H1 (cell line): ENCODE measurements at regions of chr11 and their contacts with region 1.

Region 1: DNA sequence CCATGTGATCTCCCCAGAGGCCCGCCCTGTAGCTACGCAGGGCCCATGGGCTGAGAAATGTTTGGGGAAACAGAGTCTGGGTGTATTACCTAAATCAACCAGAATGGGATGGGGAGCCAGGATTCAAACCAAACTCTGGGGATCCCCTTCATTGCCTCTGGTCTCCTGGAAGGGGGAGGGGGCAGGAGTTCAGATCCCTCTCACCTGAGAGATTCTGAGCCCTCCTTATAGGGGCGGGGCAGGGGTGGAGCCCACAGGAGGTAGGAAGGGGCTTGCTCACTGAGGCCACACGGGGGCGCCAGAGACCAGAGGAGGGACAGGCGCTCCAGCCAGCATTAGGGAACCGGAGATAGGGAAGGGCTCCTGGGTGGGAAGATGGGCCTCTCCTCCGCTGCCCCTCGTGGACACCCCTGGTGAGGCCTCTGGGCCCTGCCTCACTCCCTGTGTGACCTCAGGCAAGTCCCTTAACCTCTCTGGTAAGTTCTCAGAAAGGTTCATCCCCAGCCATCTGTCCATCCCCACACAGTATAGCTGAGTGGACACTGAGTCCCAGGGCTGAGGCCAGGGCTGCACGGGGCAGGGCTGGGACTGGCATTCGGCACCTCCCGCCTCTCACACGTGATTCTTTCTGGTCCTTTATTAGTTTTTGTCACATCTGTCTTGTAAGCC is 2.7 kb upstream of the CDC42BPG start:
- DNase-seq: peak; percentile 87 to 98
- H3K4me3 ChIP-seq: no peak overlapping the region
- H3K27ac ChIP-seq: no peak overlapping the region
- H3K4me1 ChIP-seq: peaks cover 0 to 38% (median 21%) of the 10 kb centered on the region in 4 experiments; a peak in 6 of 7 replicates
- H3K27me3 ChIP-seq: no peaks in the 10 kb centered on the region
- CTCF ChIP-seq: peak in 2 of 3 experiments; percentile 91 to 97; a peak in 3 of 4 replicates
- EP300 ChIP-seq: no peak
- POLR2A ChIP-seq: no peak
- RAD21 ChIP-seq: peak; percentile 91 to 97

Region 2: DNA sequence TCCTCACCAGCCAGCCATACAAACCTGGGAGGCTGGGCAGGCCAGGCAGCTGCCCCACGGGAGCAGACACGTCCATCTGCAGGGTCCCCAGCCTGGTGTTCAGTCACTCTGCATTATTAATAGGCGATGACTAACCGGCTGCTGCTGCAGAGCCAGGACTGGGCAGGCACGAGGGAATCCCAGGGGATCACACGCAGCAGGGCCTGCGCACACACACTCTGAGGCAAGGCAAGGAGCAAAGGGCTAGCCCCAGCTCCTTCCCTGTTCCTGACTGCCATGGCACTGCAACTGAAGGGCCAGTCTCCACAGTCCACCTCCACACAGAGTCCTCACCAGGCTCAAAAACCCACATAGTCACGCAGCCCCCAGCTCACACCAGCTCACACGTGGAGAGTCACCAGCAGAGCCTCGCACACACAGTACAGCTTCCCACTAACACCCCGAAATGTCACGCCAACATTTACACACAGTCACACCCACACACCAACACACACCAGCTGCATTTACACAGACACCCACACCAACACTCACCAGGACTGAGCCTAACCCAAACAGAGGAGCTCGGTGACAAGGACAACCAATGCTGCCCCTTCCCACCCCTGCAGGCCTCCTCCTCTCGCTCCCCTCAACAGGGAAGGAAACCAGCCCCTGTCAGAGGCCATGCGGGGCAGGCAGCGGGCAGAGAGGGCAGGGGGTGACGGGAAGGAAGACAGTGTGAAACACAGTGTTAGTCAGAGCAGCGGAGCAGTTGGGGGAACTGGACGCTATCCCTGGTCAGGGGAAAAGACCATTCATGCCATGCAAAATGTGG is 171.5 kb before region 1 on chr11:
- CTCF ChIA-PET with region 1: no interaction called
- POLR2A ChIA-PET with region 1: no interaction called
- DNase-seq: no peak
- H3K4me3 ChIP-seq: no peak overlapping the region
- H3K27ac ChIP-seq: no peak overlapping the region
- H3K4me1 ChIP-seq: no peaks in the 10 kb centered on the region; a peak in 1 of 7 replicates
- H3K27me3 ChIP-seq: peaks cover 0 to 3% (median 0%) of the 10 kb centered on the region in 4 experiments; a peak in 3 of 7 replicates
- CTCF ChIP-seq: no peak
- EP300 ChIP-seq: no peak
- POLR2A ChIP-seq: no peak
- RAD21 ChIP-seq: no peak

Region 3: GRCh38 chr11:64742889-64743590 is 104.1 kb before region 1 on chr11:
- CTCF ChIA-PET with region 1: no interaction called
- POLR2A ChIA-PET with region 1: no interaction called
- DNase-seq: peak in 1 of 2 experiments; percentile 94
- H3K4me3 ChIP-seq: peak overlapping the region; percentile 46 to 67 (median 57)
- H3K27ac ChIP-seq: no peak overlapping the region
- H3K4me1 ChIP-seq: peaks cover 4 to 33% (median 29%) of the 10 kb centered on the region in 4 experiments
- H3K27me3 ChIP-seq: peaks cover 0 to 32% (median 19%) of the 10 kb centered on the region in 4 experiments; a peak in 5 of 7 replicates
- CTCF ChIP-seq: peak in 2 of 3 experiments; percentile 74; a peak in 3 of 4 replicates
- EP300 ChIP-seq: no peak
- POLR2A ChIP-seq: 0 out of 3 replicates have a peak, but pooled peaks of 1 of the 2 experiments have one; percentile 14
- RAD21 ChIP-seq: peak; percentile 56 to 74

Region 4: DNA sequence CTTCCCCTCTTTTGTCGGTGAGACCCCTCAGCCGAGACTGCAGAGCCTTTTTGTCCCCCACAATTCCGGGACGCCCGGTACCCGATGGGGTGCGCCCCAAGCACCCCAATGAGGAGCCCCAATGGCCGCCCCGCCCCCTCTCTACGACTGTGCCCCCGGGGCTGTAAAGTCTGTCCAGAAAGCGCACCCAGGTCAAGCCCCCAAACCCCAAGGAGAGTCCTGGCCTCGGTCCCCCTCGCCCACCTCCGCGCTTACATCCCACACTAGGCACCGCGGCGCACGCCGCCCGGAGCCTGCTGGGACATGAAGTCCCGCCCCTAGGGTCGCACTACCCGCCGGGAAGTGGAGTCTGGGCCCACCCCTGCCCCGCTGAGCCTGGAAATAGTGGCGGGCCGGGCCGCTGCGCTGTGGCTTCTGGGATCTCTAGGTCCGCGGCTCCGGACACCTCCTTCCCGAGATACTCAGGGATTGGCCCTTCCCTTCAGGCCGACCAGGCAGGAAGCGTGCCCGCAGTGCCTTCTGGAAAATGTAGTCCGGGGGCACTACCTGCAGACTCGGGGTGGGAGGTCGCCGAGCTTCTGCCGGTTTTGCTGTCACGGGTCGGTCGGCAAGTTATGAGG is 36.8 kb before region 1 on chr11 and contains the start of gene MEN1:
- CTCF ChIA-PET with region 1: interaction called, 24 read pairs
- POLR2A ChIA-PET with region 1: interaction called, 13 read pairs
- DNase-seq: peak; percentile 85 to 92
- H3K4me3 ChIP-seq: peak within 1 kb of the TSS; percentile 64 to 93 (median 81)
- H3K27ac ChIP-seq: no peak within 1 kb of the TSS; the same call in 1 of the 2 replicates
- H3K4me1 ChIP-seq: peaks cover 0 to 7% (median 2%) of the 10 kb centered on the region in 4 experiments; a peak in 5 of 7 replicates
- H3K27me3 ChIP-seq: no peaks in the 10 kb centered on the region
- CTCF ChIP-seq: no peak
- EP300 ChIP-seq: no peak
- POLR2A ChIP-seq: 0 out of 3 replicates have a peak, but pooled peaks of 1 of the 2 experiments have one; percentile 21
- RAD21 ChIP-seq: no peak
- total RNA-seq, gene MEN1: 56.3 and 56.9 TPM in 2 replicates

Region 5: DNA sequence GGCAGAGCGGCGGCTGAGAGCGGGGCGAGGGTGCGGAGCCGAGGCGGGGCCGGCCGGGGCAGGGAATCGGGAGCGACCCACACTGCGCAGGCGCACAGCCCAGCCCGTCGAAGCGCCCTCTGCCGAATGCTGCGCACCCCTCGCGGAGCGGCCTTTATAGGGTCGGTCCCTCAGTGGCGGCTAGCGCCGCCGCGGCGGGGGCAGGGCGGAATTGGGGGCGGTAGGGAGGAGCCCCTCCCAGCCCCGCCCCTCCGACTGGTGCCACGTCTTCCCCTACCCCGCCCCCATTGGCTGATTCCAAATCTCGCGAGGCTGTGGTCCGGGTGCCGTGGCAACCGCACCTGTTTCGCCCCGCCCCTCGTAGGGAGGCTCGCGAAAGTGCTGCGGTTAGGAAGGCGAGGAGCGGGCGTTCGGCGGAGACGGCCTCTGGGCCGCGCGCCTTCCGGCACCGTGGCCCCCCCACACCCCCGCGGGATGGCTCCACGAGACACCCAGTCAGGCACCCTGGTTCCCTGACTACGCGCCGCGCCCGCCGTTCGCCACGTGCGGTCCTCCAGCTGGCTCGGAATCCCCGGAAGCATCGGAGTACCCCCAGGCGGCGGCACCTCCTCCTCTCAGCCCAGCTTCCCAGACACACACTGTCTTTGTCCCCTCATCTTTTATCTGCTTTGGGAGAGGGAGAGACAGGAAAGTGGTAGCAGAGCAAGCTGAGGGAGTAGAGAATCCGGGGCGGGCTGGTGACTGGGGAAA is 31.5 kb after region 1 on chr11 and contains the start of gene EHD1:
- CTCF ChIA-PET with region 1: interaction called, 1,058 read pairs
- POLR2A ChIA-PET with region 1: interaction called, 408 read pairs
- DNase-seq: peak; percentile 94 to 99
- H3K4me3 ChIP-seq: peak within 1 kb of the TSS; percentile 60 to 97 (median 94)
- H3K27ac ChIP-seq: peak within 1 kb of the TSS; percentile 71
- H3K4me1 ChIP-seq: peaks cover 0 to 22% (median 11%) of the 10 kb centered on the region in 4 experiments; a peak in 6 of 7 replicates
- H3K27me3 ChIP-seq: peaks cover 0 to 6% (median 2%) of the 10 kb centered on the region in 4 experiments; a peak in 3 of 7 replicates
- CTCF ChIP-seq: peak; percentile 66 to 76 (median 71)
- EP300 ChIP-seq: no peak
- POLR2A ChIP-seq: peak in 1 of 2 experiments; percentile 92; a peak in 2 of 3 replicates
- RAD21 ChIP-seq: 0 out of 4 replicates have a peak, but pooled peaks of 1 of the 2 experiments have one; percentile 24
- total RNA-seq, gene EHD1: 36.9 and 42.9 TPM in 2 replicates

Region 6: GRCh38 chr11:64935359-64936081 is 88.4 kb after region 1 on chr11 and contains the start of gene GPHA2:
- CTCF ChIA-PET with region 1: interaction called, 20 read pairs
- POLR2A ChIA-PET with region 1: no interaction called
- DNase-seq: peak; percentile 53 to 61
- H3K4me3 ChIP-seq: peak within 1 kb of the TSS in 2 of 4 experiments; percentile 19 to 38; a peak in 2 of 8 replicates
- H3K27ac ChIP-seq: no peak within 1 kb of the TSS
- H3K4me1 ChIP-seq: peaks cover 1 to 14% (median 7%) of the 10 kb centered on the region in 4 experiments
- H3K27me3 ChIP-seq: no peaks in the 10 kb centered on the region; a peak in 1 of 7 replicates
- CTCF ChIP-seq: peak in 2 of 3 experiments; percentile 1 to 10; a peak in 1 of 4 replicates
- EP300 ChIP-seq: no peak
- POLR2A ChIP-seq: peak in 1 of 2 experiments; percentile 41; a peak in 1 of 3 replicates
- RAD21 ChIP-seq: peak in 1 of 2 experiments; percentile 21; a peak in 2 of 4 replicates
- total RNA-seq, gene GPHA2: 0.97 and 1.5 TPM in 2 replicates

Region 7: DNA sequence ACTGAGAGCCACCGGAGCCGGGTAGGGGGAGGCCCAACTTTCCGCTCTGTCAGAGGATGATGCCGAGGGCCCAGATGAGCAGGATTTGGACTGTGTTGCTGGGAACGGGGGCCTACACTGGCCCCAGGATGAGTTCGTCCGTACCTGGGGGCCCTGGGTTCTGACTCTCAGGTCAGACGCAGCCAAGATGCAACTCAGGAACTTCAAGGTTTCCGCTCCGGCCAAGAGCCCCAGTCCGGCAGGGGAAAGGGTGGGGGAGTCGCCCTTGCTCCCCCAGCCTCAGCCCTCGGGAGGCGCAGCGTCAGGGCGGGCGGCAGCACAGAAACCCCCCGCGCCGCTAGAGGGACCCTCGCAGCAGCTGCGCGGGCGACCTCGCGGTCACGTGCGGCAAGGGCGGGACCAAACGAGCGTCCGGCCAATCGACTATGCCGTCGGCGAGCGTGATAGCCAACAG is 166.6 kb after region 1 on chr11:
- CTCF ChIA-PET with region 1: interaction called, 48 read pairs
- POLR2A ChIA-PET with region 1: interaction called, 7 read pairs
- DNase-seq: peak in 1 of 2 experiments; percentile 78
- H3K4me3 ChIP-seq: peak overlapping the region; percentile 66 to 92 (median 86)
- H3K27ac ChIP-seq: peak overlapping the region; percentile 88
- H3K4me1 ChIP-seq: peaks cover 0 to 7% (median under 1%) of the 10 kb centered on the region in 4 experiments; a peak in 4 of 7 replicates
- H3K27me3 ChIP-seq: no peaks in the 10 kb centered on the region
- CTCF ChIP-seq: peak; percentile 53 to 73 (median 72); a peak in 3 of 4 replicates
- EP300 ChIP-seq: no peak
- POLR2A ChIP-seq: no peak
- RAD21 ChIP-seq: no peak